ENCODE measurements at regions of chr10 and their contacts with region 1.

Region 1: GRCh38 chr10:71696628-71697326 is 22.8 kb downstream of the C10orf105 start:
- DNase-seq: peak; percentile 64 to 82
- ATAC-seq: peak; percentile 72 to 78 (median 73)
- H3K4me3 ChIP-seq: no peak overlapping the region
- H3K27ac ChIP-seq: no peak overlapping the region
- H3K4me1 ChIP-seq: peaks cover 11% of the 10 kb centered on the region
- H3K27me3 ChIP-seq: peaks cover 0 to 2% (median 0%) of the 10 kb centered on the region in 3 donors
- CTCF ChIP-seq: peak; percentile 86

Region 2: DNA sequence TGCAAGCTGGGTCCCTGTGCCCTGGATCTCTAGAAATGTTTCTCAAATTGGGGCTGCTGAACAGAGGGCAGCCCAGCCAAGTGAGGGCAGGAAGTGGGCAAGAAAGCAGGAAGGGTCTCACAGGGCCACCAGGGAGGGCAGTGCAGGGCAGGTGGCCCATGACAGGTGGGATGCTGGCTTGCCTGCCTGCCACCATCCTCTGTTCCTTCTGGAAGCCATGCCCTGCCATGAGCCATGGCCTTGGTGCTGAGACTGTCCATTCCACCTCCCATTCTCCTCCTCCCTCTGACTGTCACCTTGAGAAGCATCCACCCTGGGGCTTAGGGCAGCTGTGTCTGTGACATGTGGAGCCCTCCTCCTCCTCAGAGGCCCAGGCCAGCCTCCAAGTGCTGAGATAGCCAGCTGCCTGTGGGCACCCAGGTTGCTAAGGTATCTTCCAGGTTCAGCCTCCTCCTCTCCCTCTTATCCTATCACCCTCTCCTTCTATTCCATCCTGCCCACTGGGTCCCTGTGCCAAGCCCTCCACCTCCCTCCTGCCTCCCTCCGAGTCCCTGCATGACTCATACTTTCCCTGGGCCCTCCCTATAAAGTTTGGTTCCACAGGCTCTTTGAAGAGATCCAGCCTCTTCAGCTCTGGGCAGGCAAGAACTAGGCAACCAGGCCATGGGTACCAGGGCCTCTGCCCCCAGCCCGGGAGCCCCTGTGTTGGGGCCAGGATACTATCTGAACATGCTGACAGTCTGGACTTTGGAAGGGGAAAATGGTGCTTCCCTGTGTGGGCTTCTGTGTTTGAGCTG is 75.2 kb after region 1 on chr10:
- intact Hi-C with region 1: loop called in 1 of 2 experiments (anchors 5 kb)
- DNase-seq: peak; percentile 67 to 78
- ATAC-seq: peak; percentile 9 to 46 (median 26)
- H3K4me3 ChIP-seq: peak overlapping the region; percentile 76
- H3K27ac ChIP-seq: peak overlapping the region; percentile 81
- H3K4me1 ChIP-seq: peaks cover 69% of the 10 kb centered on the region
- H3K27me3 ChIP-seq: no peaks in the 10 kb centered on the region
- CTCF ChIP-seq: no peak

Region 3: GRCh38 chr10:71812016-71812912 is 115.5 kb after region 1 on chr10:
- intact Hi-C with region 1: loop called in 1 of 2 experiments (anchors 5 kb)
- DNase-seq: peak; percentile 72 to 87
- ATAC-seq: peak; percentile 66 to 83 (median 75)
- H3K4me3 ChIP-seq: no peak overlapping the region
- H3K27ac ChIP-seq: no peak overlapping the region
- H3K4me1 ChIP-seq: peaks cover 7% of the 10 kb centered on the region
- H3K27me3 ChIP-seq: no peaks in the 10 kb centered on the region
- CTCF ChIP-seq: peak; percentile 79

Region 4: GRCh38 chr10:71835671-71836595 is 139.2 kb after region 1 on chr10:
- intact Hi-C with region 1: no loop called
- DNase-seq: peak; percentile 72 to 89
- ATAC-seq: peak; percentile 51 to 67 (median 56)
- H3K4me3 ChIP-seq: peak overlapping the region; percentile 47
- H3K27ac ChIP-seq: peak overlapping the region; percentile 97
- H3K4me1 ChIP-seq: peaks cover 80% of the 10 kb centered on the region
- H3K27me3 ChIP-seq: no peaks in the 10 kb centered on the region
- CTCF ChIP-seq: no peak